PC-9 (cell line): ENCODE measurements at regions of chr2 and their contacts with region 1.

Region 1: GRCh38 chr2:219823574-219823973 is 196.1 kb downstream of the SLC4A3 start:
- DNase-seq: no peak
- H3K4me3 ChIP-seq: no peak overlapping the region
- H3K27ac ChIP-seq: no peak overlapping the region
- H3K4me1 ChIP-seq: no peaks in the 10 kb centered on the region
- H3K27me3 ChIP-seq: no peaks in the 10 kb centered on the region
- CTCF ChIP-seq: no peak

Region 2: GRCh38 chr2:219701847-219702634 is 121.5 kb before region 1 on chr2:
- CTCF ChIA-PET with region 1: no interaction called
- POLR2A ChIA-PET with region 1: interaction called, 12 read pairs
- intact Hi-C with region 1: no loop called
- DNase-seq: no peak
- H3K4me3 ChIP-seq: no peak overlapping the region
- H3K27ac ChIP-seq: no peak overlapping the region
- H3K4me1 ChIP-seq: peaks cover 8% of the 10 kb centered on the region
- H3K27me3 ChIP-seq: no peaks in the 10 kb centered on the region
- CTCF ChIP-seq: no peak

Region 3: DNA sequence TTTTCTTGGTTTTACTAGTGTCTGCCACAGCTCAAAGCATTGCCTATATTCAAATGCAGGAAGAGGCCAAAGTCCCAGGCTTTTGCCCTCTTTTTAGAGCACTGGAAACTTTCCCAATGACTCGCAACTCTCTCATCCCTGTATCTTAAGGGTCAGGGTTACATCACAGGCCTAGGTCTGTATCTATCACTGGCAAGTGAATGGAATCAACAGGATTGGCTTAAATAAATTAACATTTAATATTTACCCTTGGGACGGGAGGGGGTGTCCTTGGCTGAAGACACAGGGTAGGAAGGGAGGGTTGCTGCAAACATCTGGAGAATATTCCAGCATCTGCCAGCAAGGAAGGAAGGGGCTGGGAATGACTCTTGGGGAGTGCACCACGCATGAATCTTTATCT is 46.5 kb after region 1 on chr2:
- CTCF ChIA-PET with region 1: no interaction called
- POLR2A ChIA-PET with region 1: no interaction called
- intact Hi-C with region 1: no loop called
- DNase-seq: no peak
- H3K4me3 ChIP-seq: no peak overlapping the region
- H3K27ac ChIP-seq: no peak overlapping the region
- H3K4me1 ChIP-seq: no peaks in the 10 kb centered on the region
- H3K27me3 ChIP-seq: no peaks in the 10 kb centered on the region
- CTCF ChIP-seq: no peak